MCF 10A (cell line): ENCODE measurements at regions of chr4 and their contacts with region 1.

Region 1: GRCh38 chr4:44760142-44760898 is 34.0 kb upstream of the GNPDA2 start:
- DNase-seq: peak; percentile 59
- H3K4me3 Mint-ChIP-seq: no peak overlapping the region
- H3K27ac Mint-ChIP-seq: no peak overlapping the region
- H3K4me1 Mint-ChIP-seq: peaks cover 6% of the 10 kb centered on the region
- H3K27me3 Mint-ChIP-seq: no peaks in the 10 kb centered on the region
- CTCF ChIP-seq: peak; percentile 48

Region 2: GRCh38 chr4:44544158-44544557 is 216.2 kb before region 1 on chr4:
- CTCF ChIA-PET with region 1: no interaction called
- POLR2A ChIA-PET with region 1: no interaction called
- intact Hi-C with region 1: no loop called
- DNase-seq: no peak
- H3K4me3 Mint-ChIP-seq: no peak overlapping the region
- H3K27ac Mint-ChIP-seq: no peak overlapping the region
- H3K4me1 Mint-ChIP-seq: no peaks in the 10 kb centered on the region
- H3K27me3 Mint-ChIP-seq: no peaks in the 10 kb centered on the region
- CTCF ChIP-seq: no peak

Region 3: GRCh38 chr4:44771789-44772188 is 11.5 kb after region 1 on chr4:
- CTCF ChIA-PET with region 1: interaction called, 11 read pairs
- POLR2A ChIA-PET with region 1: no interaction called
- intact Hi-C with region 1: no loop called
- DNase-seq: no peak
- H3K4me3 Mint-ChIP-seq: no peak overlapping the region
- H3K27ac Mint-ChIP-seq: peak overlapping the region; percentile 43
- H3K4me1 Mint-ChIP-seq: peaks cover 6% of the 10 kb centered on the region
- H3K27me3 Mint-ChIP-seq: no peaks in the 10 kb centered on the region
- CTCF ChIP-seq: no peak

Region 4: DNA sequence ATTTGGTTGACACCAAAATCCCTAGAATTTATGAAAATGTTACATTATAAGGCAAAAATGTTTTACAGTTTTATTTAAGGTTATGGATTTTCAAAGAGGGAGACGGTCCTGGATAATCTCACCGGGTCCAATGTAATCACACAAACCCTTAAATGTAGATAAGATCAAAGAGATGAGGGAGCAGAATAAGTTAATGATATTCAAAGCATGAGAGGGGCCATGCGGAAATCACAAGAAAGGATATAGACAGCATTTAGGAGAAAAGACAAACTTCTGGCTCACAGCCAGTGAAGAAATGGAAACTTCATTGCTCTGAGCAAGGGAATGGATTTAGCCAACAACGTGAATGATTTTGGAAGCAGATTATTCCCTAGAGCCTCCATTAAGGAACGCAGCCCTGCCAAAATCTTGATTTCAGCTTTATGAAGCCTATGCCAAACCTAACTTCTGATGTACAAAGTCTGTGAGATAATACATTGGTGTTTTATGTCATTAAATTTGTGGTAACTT is 650.4 kb after region 1 on chr4:
- CTCF ChIA-PET with region 1: no interaction called
- POLR2A ChIA-PET with region 1: no interaction called
- intact Hi-C with region 1: no loop called
- DNase-seq: no peak
- H3K4me3 Mint-ChIP-seq: no peak overlapping the region
- H3K27ac Mint-ChIP-seq: no peak overlapping the region
- H3K4me1 Mint-ChIP-seq: no peaks in the 10 kb centered on the region
- H3K27me3 Mint-ChIP-seq: no peaks in the 10 kb centered on the region
- CTCF ChIP-seq: no peak

Region 5: GRCh38 chr4:45442466-45442865 is 682.1 kb after region 1 on chr4:
- CTCF ChIA-PET with region 1: interaction called, 6 read pairs
- POLR2A ChIA-PET with region 1: no interaction called
- intact Hi-C with region 1: loop called (anchors 2 kb)
- DNase-seq: peak; percentile 63
- H3K4me3 Mint-ChIP-seq: no peak overlapping the region
- H3K27ac Mint-ChIP-seq: no peak overlapping the region
- H3K4me1 Mint-ChIP-seq: peaks cover 7% of the 10 kb centered on the region
- H3K27me3 Mint-ChIP-seq: no peaks in the 10 kb centered on the region
- CTCF ChIP-seq: peak; percentile 44

Region 6: GRCh38 chr4:45550766-45551366 is 790.5 kb after region 1 on chr4:
- CTCF ChIA-PET with region 1: interaction called, 3 read pairs
- POLR2A ChIA-PET with region 1: no interaction called
- intact Hi-C with region 1: loop called (anchors 10 kb)
- DNase-seq: peak; percentile 32
- H3K4me3 Mint-ChIP-seq: no peak overlapping the region
- H3K27ac Mint-ChIP-seq: peak overlapping the region; percentile 20
- H3K4me1 Mint-ChIP-seq: peaks cover 4% of the 10 kb centered on the region
- H3K27me3 Mint-ChIP-seq: no peaks in the 10 kb centered on the region
- CTCF ChIP-seq: peak; percentile 32

Region 7: GRCh38 chr4:46270986-46271596 is 1510.8 kb after region 1 on chr4:
- CTCF ChIA-PET with region 1: interaction called, 6 read pairs
- POLR2A ChIA-PET with region 1: no interaction called
- intact Hi-C with region 1: loop called (anchors 1 kb)
- DNase-seq: peak; percentile 59
- H3K4me3 Mint-ChIP-seq: no peak overlapping the region
- H3K27ac Mint-ChIP-seq: no peak overlapping the region
- H3K4me1 Mint-ChIP-seq: no peaks in the 10 kb centered on the region
- H3K27me3 Mint-ChIP-seq: no peaks in the 10 kb centered on the region
- CTCF ChIP-seq: peak; percentile 58